AG04449 (cell line): ENCODE measurements at regions of chr1 and their contacts with region 1.

Region 1: DNA sequence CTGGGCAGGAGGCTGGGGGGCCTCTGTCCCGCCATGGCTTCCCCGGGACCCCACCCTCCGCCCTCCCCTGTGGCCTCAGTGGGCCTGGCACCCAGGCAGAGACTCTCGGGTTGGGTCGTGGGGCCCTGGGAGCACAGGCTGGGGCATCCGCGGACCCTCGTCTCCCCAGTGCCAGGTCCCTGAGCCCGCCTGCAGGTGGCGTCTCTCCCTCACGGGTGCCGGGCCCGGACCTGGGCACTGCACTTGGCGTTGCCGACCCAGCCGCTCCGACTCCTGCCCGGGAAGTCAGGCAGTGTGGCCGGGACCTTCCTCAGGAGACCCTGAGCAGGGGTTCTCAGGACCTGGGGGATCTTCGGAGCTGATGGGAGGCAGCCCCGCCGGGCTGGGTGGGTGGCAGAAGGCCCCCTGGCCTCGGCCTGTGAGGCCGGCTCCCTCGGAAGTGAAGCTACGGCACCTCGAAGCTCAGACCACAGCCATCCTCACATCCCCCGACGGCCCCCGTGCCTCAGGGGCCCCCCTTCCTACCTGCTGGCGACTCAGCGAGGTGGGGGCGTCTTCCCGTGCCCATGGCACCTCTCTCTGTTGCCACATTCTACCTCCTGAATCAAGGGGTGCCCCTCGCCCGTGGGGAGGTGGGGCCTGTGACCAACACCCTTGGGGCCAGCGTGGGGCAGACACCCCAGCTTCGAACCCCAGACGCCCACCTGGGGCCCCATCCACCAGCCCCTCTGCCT is 6.4 kb upstream of the C1orf159 start:
- DNase-seq: no peak
- H3K4me3 ChIP-seq: peak overlapping the region; percentile 37
- CTCF ChIP-seq: peak; percentile 98

Region 2: GRCh38 chr1:1132042-1132950 is 10.1 kb after region 1 on chr1:
- CTCF ChIA-PET with region 1: interaction called, 19 read pairs
- POLR2A ChIA-PET with region 1: no interaction called
- DNase-seq: no peak
- H3K4me3 ChIP-seq: no peak overlapping the region
- CTCF ChIP-seq: no peak

Region 3: DNA sequence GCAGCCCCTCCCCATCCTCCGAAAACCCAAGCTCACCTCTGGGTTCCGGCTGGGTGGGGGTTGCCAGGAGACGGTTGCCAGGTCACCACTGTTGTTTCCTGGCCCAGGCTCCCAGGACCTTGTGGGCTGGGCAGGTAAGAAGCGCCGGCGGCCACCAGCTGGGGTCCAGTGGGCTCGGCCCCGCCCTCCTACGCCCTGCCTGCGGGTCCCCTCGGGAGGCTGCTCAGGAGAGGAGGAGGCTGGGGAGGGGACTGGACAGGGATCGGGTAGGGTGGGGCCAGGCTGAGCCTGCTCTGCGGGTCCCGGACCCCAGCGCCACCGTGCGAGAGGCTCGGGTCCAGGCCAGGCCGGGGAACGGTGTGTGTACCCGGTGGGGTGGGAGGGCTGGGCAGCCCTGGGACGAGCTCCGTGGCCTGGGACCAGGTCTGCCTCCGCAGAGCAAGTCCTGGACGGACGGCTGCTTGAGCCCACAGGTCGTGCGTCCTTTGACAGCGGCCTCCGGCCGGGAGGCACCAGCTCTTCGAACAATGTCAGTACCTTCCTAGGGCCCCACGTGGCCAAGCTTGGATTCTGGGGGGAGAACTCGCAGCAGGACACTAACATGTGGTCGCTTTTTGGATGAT is 51.7 kb after region 1 on chr1 and contains the start of gene TTLL10:
- CTCF ChIA-PET with region 1: no interaction called
- POLR2A ChIA-PET with region 1: no interaction called
- DNase-seq: no peak
- H3K4me3 ChIP-seq: no peak within 1 kb of the TSS
- CTCF ChIP-seq: no peak

Region 4: DNA sequence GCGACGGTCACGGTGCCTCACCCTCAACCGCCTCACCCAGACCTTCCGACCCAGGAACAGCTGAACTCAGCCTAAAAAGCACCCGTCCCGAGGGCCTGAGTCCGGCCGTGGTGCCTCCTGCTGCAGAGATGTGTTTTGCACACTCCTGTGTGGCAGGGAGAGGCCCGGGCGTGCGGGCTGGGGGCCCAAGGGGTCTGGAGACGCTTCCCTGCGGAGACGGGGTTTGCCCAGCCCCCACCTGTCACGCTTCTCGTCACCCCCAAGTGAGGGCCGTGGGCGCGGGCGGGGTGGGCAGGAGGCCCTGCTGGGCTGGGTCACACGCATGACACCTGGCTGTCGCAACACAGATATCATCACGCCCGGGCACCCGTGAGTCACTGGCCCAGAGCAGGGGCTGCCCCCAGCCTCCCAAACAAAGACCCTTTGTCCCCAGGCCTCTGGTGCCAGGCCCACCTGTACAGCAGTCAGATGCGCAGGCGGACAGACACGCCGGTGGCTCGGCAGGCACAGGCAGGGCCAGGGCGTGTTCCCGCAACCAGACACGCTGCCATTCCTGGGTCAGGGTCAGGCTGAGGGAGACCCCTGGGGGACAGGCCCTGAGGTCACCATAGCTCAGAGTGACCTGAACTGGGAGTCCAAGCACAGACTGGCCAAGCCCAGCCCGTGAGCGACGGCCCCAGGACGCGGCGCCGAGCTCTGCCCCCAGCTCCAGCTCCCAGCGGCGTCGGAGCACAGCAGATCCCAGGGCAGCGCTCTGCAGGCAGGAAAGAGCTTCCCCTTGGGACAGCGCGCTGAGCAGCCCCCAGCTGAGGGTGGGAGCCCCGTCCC is 115.8 kb after region 1 on chr1:
- CTCF ChIA-PET with region 1: interaction called, 10 read pairs
- POLR2A ChIA-PET with region 1: no interaction called
- DNase-seq: no peak
- H3K4me3 ChIP-seq: no peak overlapping the region
- CTCF ChIP-seq: no peak

Region 5: DNA sequence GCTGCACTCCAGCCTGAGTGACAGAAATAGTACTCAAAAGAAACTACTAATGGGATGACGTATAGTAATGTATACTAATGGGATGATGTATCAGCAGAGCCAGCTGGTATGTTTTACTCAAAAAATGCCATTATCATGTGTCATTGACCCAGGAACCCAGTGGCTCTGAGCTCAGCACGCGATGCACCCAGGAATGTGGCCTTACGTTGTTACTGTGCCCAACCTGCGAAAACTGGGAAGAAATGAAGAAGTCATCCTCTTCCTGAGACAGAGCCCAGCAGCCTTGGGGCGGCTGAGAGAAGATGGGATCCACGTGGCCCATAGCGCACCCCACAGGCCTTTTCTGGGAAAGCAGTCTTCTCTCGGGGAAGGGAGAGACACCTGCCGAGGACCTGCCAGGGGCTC is 142.6 kb after region 1 on chr1:
- CTCF ChIA-PET with region 1: interaction called, 22 read pairs
- POLR2A ChIA-PET with region 1: no interaction called
- DNase-seq: peak; percentile 98
- H3K4me3 ChIP-seq: peak overlapping the region; percentile 32
- CTCF ChIP-seq: peak; percentile 66

Region 6: GRCh38 chr1:1291548-1292441 is 169.6 kb after region 1 on chr1:
- CTCF ChIA-PET with region 1: interaction called, 60 read pairs
- POLR2A ChIA-PET with region 1: interaction called, 3 read pairs
- DNase-seq: no peak
- H3K4me3 ChIP-seq: no peak overlapping the region
- CTCF ChIP-seq: peak; percentile 62

Region 7: GRCh38 chr1:1374929-1375662 is 252.9 kb after region 1 on chr1 and contains the start of gene AURKAIP1:
- CTCF ChIA-PET with region 1: interaction called, 18 read pairs
- POLR2A ChIA-PET with region 1: no interaction called
- DNase-seq: peak; percentile 97
- H3K4me3 ChIP-seq: peak within 1 kb of the TSS; percentile 85
- CTCF ChIP-seq: peak; percentile 67